ENCODE measurements at regions of chr2 and their contacts with region 1.

Region 1: DNA sequence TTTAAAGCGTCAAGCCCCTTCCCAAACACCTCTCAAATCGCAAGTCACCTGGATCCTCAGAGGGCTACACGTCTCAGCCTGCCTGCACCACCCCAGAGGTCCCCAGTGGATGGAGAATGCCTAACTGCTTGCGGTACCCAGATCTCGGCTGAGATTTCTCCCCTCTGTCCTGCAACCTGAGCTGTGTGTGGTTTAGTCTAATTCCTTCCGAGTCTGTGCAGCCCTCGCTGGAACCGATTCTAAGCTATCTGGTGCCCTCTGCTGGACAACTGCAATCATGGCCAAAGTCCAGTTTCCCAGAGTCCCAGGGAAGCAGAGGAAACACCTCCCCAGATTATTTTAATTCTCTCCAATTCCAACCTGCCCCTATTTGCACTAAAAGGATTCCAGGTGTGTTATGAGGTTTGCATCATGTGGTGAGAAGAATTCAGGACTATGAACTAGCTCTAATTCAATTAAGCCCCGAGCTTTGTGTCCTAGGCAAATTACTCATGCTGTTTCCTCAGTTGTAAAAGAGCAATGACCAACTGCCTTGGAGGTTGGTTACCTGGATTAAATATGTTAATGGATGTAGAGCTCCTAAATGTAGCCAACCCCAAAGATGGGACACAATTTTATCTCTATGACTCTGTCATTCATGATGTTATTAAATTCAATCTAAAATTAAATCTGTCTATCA is 276.1 kb upstream of the NCKAP5 start:
- DNase-seq: peak; percentile 68
- ATAC-seq: no peak
- H3K4me3 ChIP-seq: no peak overlapping the region
- H3K4me3 Mint-ChIP-seq: no peak overlapping the region
- H3K27ac ChIP-seq: no peak overlapping the region
- H3K27ac Mint-ChIP-seq: no peak overlapping the region
- H3K4me1 ChIP-seq: no peaks in the 10 kb centered on the region
- H3K4me1 Mint-ChIP-seq: peaks cover 6% of the 10 kb centered on the region
- H3K27me3 ChIP-seq: peaks cover 0 to 11% (median 3%) of the 10 kb centered on the region in 4 experiments
- H3K27me3 Mint-ChIP-seq: peaks cover 11% of the 10 kb centered on the region
- CTCF ChIP-seq: peak; percentile 95

Region 2: DNA sequence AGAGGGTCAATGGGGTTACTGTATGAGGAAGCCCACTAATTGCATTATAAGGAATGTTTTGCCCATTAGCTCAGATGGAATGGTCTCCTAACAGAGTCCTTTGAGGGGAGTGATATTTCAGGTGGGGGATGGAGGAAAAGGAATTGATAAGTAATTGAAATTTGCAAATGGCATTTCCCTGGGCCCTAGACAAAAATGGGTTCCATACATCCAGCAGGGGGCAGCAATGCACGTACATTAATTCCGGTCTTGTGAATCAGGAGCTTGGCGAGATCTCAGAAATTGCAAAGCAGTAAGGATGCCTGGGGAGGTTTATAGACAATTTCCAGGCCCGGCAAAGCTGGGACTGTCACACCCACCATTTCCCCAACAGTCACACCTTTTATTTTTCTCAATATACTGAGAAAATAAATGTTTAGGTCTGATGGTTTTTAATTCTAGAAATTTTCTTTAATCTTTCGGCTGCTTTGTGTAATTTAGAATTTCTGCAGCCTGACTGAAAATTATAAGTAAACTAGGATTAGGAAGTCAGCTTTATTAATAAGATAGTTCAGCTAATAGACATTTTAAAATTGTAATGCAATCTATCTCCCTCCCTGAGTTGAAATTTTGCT is 1297.2 kb before region 1 on chr2:
- CTCF ChIA-PET with region 1: interaction called, 34 read pairs
- POLR2A ChIA-PET with region 1: no interaction called
- intact Hi-C with region 1: no loop called
- DNase-seq: peak; percentile 52
- ATAC-seq: no peak
- H3K4me3 ChIP-seq: no peak overlapping the region
- H3K4me3 Mint-ChIP-seq: no peak overlapping the region
- H3K27ac ChIP-seq: no peak overlapping the region
- H3K27ac Mint-ChIP-seq: no peak overlapping the region
- H3K4me1 ChIP-seq: no peaks in the 10 kb centered on the region
- H3K4me1 Mint-ChIP-seq: no peaks in the 10 kb centered on the region
- H3K27me3 ChIP-seq: no peaks in the 10 kb centered on the region
- H3K27me3 Mint-ChIP-seq: no peaks in the 10 kb centered on the region
- CTCF ChIP-seq: peak; percentile 74

Region 3: DNA sequence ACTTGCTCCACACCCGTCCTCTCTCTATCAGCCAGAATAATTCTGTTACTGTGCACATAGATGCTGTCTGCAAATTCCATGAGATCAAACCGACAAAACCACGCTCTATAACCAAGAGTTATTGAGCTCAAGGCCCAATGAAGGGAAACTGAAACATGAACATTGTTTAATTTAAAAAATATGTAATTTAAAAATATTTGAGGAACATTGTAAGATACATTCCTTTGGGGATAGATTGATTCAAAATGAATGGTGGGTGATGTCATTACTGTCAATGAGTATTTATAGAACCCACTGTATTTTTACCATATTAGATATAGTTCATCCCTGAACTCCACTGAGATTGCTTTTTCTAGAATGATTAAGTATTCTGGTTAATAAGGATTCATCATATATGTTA is 326.5 kb before region 1 on chr2:
- CTCF ChIA-PET with region 1: interaction called, 5 read pairs
- POLR2A ChIA-PET with region 1: no interaction called
- intact Hi-C with region 1: loop called (anchors 10 kb)
- DNase-seq: no peak
- ATAC-seq: no peak
- H3K4me3 ChIP-seq: no peak overlapping the region
- H3K4me3 Mint-ChIP-seq: no peak overlapping the region
- H3K27ac ChIP-seq: no peak overlapping the region
- H3K27ac Mint-ChIP-seq: no peak overlapping the region
- H3K4me1 ChIP-seq: no peaks in the 10 kb centered on the region
- H3K4me1 Mint-ChIP-seq: no peaks in the 10 kb centered on the region
- H3K27me3 ChIP-seq: no peaks in the 10 kb centered on the region
- H3K27me3 Mint-ChIP-seq: peaks cover 7% of the 10 kb centered on the region
- CTCF ChIP-seq: no peak

Region 4: DNA sequence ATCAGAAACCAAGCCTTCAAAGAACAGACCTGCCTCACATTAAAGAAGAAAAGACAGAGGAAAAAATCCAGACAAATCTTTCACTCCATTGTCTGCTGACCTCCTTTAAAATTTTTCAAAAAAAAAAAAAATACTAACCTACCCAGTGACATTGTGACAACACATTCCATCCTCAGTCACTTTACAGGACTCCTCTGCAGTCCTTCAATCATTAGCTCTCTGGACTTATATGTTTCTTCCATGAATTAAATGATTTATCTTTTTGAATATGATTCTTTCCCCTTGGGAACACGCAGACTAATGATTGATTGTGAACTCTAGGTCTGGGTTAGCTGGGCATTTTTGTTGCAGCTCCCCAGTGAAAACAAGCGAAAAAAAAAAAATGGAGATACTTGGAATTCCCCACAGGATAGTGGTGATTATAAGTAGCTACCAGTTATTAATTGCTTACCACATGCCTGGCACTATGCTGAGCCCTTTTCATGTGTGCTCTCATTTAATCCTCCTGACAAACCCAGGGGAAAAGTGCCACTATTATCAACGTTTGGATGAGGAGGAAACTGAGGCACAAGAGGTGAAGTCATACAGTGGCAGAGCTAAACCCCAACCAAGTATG is 14.8 kb before region 1 on chr2:
- CTCF ChIA-PET with region 1: interaction called, 34 read pairs
- POLR2A ChIA-PET with region 1: no interaction called
- intact Hi-C with region 1: no loop called
- DNase-seq: no peak
- ATAC-seq: no peak
- H3K4me3 ChIP-seq: no peak overlapping the region
- H3K4me3 Mint-ChIP-seq: no peak overlapping the region
- H3K27ac ChIP-seq: no peak overlapping the region
- H3K27ac Mint-ChIP-seq: no peak overlapping the region
- H3K4me1 ChIP-seq: no peaks in the 10 kb centered on the region
- H3K4me1 Mint-ChIP-seq: no peaks in the 10 kb centered on the region
- H3K27me3 ChIP-seq: peaks cover 0 to 6% (median under 1%) of the 10 kb centered on the region in 4 experiments
- H3K27me3 Mint-ChIP-seq: peaks cover 23% of the 10 kb centered on the region
- CTCF ChIP-seq: no peak

Region 5: GRCh38 chr2:133855526-133855925 is 11.2 kb after region 1 on chr2:
- CTCF ChIA-PET with region 1: interaction called, 12 read pairs
- POLR2A ChIA-PET with region 1: no interaction called
- intact Hi-C with region 1: no loop called
- DNase-seq: no peak
- ATAC-seq: no peak
- H3K4me3 ChIP-seq: no peak overlapping the region
- H3K4me3 Mint-ChIP-seq: no peak overlapping the region
- H3K27ac ChIP-seq: no peak overlapping the region
- H3K27ac Mint-ChIP-seq: no peak overlapping the region
- H3K4me1 ChIP-seq: no peaks in the 10 kb centered on the region
- H3K4me1 Mint-ChIP-seq: no peaks in the 10 kb centered on the region
- H3K27me3 ChIP-seq: peaks cover 0 to 3% (median 0%) of the 10 kb centered on the region in 4 experiments
- H3K27me3 Mint-ChIP-seq: peaks cover 16% of the 10 kb centered on the region
- CTCF ChIP-seq: no peak

Measured in B cell (primary cell).